Esophagus muscularis mucosa (tissue), 4 donors: ENCODE measurements at regions of chr18 and their contacts with region 1.

Region 1: DNA sequence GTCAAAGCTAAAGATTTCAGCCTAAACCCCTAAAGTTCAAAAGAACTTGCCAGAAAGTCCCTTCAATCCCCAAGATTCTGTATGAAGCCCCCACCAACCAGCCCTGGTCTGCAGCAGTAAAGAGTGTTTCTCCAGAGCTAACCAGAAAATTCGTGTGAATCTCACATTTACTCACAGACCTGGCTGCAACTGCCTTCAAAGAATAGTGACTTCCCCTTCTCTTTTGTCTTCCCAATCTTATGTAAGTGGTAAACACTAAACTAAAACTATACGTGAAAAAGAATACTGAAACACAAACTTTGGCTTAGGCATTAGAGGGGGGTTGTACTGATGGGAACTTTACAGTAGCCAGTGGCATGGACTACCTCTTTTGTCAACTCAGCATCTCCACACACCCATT is 50.6 kb upstream of the SETBP1 start:
- DNase-seq: no peak
- H3K4me3 ChIP-seq: no peak overlapping the region
- H3K27ac ChIP-seq: no peak overlapping the region
- H3K4me1 ChIP-seq: peaks cover 0 to 3% (median 0%) of the 10 kb centered on the region in 4 donors
- H3K27me3 ChIP-seq: no peaks in the 10 kb centered on the region
- CTCF ChIP-seq: no peak
- EP300 ChIP-seq: no peak
- POLR2A ChIP-seq: no peak

Region 2: GRCh38 chr18:44537521-44537920 is 92.6 kb before region 1 on chr18:
- intact Hi-C with region 1: loop called (anchors 5 kb)
- DNase-seq: no peak
- H3K4me3 ChIP-seq: no peak overlapping the region
- H3K27ac ChIP-seq: no peak overlapping the region
- H3K4me1 ChIP-seq: peaks cover 0 to 42% (median 35%) of the 10 kb centered on the region in 4 donors
- H3K27me3 ChIP-seq: no peaks in the 10 kb centered on the region
- CTCF ChIP-seq: no peak
- EP300 ChIP-seq: no peak
- POLR2A ChIP-seq: no peak